A549 (cell line): ENCODE measurements at regions of chr1 and their contacts with region 1.

Region 1: GRCh38 chr1:167533851-167534300 is 15.5 kb upstream of the CD247 start:
- DNase-seq: peak; percentile 68 to 90
- ATAC-seq: peak; percentile 89 to 95
- H3K4me3 ChIP-seq: no peak overlapping the region
- H3K27ac ChIP-seq: no peak overlapping the region
- H3K4me1 ChIP-seq: 0 out of 3 replicates have a peak, but pooled peaks cover 4% of the 10 kb centered on the region
- CTCF ChIP-seq: peak; percentile 88
- EP300 ChIP-seq: no peak
- POLR2A ChIP-seq: no peak
- RAD21 ChIP-seq: peak; percentile 86 to 90

Region 2: DNA sequence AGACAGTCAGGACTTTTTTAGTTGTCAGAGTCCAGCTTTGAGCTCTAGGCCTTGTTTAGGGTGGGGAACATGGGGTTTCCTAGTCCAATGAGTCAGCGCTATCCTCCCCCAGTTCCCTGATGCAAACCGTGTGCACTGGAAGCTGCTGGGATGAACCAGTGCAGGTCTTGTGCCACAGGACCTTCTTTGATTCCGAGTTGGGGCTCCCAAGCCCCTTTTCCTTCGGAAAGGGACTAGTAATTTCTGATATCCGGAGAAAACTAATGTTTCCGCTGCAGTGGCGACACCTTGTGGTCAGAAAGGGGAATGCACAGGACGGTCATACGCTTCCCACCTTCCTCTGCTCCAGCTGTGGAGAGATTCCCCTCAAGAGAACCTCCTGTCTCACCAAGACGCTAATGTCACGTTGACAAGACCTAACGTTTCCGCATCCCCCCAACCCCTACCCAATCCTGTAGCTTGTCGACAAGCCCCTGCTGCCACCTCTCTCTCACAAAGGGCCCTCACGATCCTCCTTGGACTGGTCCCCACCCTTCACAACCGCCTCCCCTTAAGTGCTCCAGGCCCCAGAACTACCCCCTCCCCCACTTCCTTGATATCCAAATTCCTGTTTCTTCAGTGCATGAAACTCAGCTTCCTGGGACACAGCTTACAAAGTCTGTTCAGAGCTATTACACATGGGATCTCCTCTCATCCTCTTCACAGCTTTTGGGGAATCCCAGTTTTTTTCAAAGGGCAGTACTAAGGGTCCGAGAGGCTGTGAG is 474.6 kb before region 1 on chr1:
- CTCF ChIA-PET with region 1: interaction called, 56 read pairs
- POLR2A ChIA-PET with region 1: no interaction called
- DNase-seq: peak; percentile 52 to 67
- ATAC-seq: peak in 1 of 2 experiments; percentile 73; a peak in 3 of 6 replicates
- H3K4me3 ChIP-seq: no peak overlapping the region
- H3K27ac ChIP-seq: peak overlapping the region; percentile 51 to 86
- H3K4me1 ChIP-seq: no peaks in the 10 kb centered on the region
- CTCF ChIP-seq: peak; percentile 92
- EP300 ChIP-seq: no peak
- POLR2A ChIP-seq: no peak
- RAD21 ChIP-seq: peak; percentile 78 to 81

Region 3: DNA sequence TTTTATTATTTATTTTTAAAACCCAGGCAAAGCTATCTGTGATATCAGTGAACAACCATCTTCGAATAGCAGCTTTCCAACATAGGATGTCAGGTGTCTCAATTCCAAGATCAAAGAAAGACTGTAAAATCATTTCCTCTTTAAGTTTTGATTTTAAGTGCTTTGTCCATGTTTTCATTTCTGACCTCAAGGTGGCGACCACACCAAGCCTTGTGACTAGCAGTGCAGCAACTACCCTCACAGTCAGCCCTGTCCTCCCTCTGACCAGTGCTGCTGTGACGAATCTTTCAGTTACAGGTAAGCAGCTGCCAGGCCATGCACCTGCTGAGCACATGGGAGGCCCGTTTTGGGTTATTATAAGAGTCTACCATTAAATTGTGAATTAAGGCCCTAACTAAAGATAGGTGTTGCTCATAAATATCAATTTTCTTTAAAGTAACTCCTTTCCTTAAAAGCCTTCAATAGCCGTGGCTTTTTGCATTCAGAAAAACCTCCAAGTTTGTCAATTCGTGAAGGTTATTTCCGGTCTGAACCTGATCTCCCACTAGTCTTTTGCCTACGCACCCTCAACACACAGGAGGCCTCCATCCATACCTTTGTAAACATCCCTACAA is 132.5 kb before region 1 on chr1:
- CTCF ChIA-PET with region 1: interaction called, 42 read pairs
- POLR2A ChIA-PET with region 1: interaction called, 3 read pairs
- DNase-seq: peak; percentile 51 to 74
- ATAC-seq: peak; percentile 96 to 98
- H3K4me3 ChIP-seq: no peak overlapping the region
- H3K27ac ChIP-seq: no peak overlapping the region
- H3K4me1 ChIP-seq: peaks cover 6% of the 10 kb centered on the region; the same call in 1 of the 3 replicates
- CTCF ChIP-seq: peak; percentile 81
- EP300 ChIP-seq: no peak
- POLR2A ChIP-seq: no peak
- RAD21 ChIP-seq: peak; percentile 67 to 75

Region 4: DNA sequence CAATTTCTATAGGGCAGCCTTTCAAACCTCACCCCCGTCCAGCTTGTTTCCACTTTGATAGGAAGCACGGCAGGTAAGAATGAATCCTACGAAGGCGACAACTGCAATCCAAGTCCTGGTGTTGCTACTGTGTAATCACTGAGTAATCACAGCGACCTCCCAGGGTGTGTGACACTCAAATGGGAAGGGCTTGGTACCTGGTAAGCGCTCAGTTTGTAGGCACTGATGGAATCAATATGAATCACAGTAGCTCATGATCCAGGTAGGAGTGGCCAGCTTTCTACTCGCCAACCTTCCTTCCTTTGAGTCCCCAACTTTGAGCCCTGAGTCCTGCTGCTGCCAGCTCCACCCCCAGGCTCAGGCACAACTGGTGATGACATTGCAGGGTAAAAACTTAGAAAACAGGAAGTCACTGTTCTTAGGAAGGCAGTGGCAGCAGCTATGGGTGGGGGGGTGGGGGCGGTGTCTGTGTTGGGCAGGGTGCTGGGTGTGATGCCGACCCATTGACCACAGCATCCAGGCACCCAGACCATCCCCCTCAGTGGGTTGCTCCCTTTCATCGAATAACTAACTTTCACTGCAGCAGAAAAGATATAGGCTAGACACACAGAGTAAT is 86.2 kb before region 1 on chr1:
- CTCF ChIA-PET with region 1: interaction called, 19 read pairs
- POLR2A ChIA-PET with region 1: no interaction called
- DNase-seq: peak; percentile 24 to 61
- ATAC-seq: peak; percentile 59 to 85
- H3K4me3 ChIP-seq: no peak overlapping the region
- H3K27ac ChIP-seq: peak overlapping the region; percentile 34 to 56; a peak in 5 of 6 replicates
- H3K4me1 ChIP-seq: peaks cover 14% of the 10 kb centered on the region
- CTCF ChIP-seq: no peak
- EP300 ChIP-seq: no peak
- POLR2A ChIP-seq: no peak
- RAD21 ChIP-seq: no peak

Region 5: DNA sequence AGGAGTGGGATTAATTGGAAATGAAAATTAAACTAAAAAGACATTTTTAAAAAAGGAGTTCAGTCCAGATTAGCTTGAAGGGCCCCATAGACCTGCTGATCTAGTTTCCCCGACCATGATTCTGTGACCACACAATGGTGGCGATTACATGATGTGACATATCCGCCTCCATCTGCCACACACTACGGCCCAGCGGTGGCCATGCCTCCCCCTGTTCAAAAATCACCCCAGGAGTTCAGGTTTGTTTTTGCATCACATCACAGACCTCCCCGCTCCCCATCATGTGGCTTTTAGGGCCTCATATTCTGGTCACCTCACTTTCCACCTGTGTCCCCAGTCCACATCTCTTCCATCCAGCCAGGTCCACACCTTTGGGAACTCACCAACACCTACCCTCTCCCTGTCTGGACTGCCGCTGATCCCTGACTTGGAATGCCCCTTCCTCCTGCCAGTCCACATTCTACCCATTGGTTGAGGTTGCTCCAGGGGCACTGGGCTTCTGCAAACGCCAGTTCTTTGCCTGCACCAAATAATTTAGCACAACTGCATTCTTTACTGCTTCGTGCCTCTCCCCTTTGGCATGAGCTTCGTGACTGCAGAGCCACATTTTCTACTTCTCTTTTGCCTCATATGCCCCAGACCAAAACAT is 54.4 kb before region 1 on chr1:
- CTCF ChIA-PET with region 1: interaction called, 10 read pairs
- POLR2A ChIA-PET with region 1: no interaction called
- DNase-seq: no peak
- ATAC-seq: no peak; a peak in 1 of 6 replicates
- H3K4me3 ChIP-seq: no peak overlapping the region
- H3K27ac ChIP-seq: no peak overlapping the region
- H3K4me1 ChIP-seq: no peaks in the 10 kb centered on the region
- CTCF ChIP-seq: no peak
- EP300 ChIP-seq: no peak
- POLR2A ChIP-seq: no peak
- RAD21 ChIP-seq: no peak

Region 6: DNA sequence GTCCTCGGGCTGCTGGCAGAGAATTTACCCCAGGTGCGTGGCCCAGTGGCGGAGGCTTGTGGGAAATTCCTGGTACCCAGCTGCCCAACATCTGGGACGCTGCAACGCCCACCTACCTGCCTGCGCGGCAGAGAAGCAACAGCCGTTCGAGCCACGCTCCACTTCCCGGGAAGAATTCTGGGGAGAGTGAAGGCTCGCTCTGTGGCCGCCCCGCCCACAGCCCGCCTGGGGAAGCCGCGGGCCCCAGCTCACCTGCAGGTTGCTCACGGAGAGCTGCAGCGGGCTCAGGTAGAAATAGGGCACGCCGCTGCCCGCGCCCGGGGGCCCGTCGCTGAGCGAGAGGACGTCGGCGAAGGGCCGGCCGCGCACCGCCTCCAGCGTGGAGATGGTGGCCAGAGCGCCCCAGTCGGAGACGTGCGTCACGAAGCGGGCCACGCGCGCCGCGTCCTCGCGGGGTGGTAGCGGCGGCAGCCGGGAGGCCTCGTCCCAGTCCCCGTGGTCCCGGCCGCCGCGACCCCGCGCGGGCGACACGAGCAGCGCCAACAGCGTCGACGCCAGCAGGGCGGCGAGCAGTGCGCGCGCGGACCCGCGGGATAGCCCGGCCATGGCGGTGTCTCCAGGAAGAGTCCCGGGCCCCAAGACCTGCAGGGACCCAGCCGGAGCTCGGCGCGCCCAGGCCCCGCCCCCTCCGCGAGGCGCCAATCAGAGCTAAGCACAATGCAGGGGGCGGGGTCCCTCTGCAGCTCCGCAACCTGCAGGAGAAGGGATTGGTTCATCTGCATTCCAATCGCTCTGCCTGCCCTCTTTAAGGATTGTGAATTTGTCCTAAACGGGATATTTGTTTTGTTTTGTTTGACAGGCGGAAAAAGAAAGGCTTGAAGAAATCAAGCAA is 19.5 kb after region 1 on chr1 and contains the start of gene CREG1:
- CTCF ChIA-PET with region 1: interaction called, 17 read pairs
- POLR2A ChIA-PET with region 1: interaction called, 3 read pairs
- DNase-seq: peak; percentile 93 to 96
- ATAC-seq: peak; percentile 95 to 100
- H3K4me3 ChIP-seq: peak within 1 kb of the TSS; percentile 68
- H3K27ac ChIP-seq: peak within 1 kb of the TSS; percentile 77 to 95
- H3K4me1 ChIP-seq: peaks cover 21% of the 10 kb centered on the region
- CTCF ChIP-seq: no peak
- EP300 ChIP-seq: no peak
- POLR2A ChIP-seq: peak; percentile 90
- RAD21 ChIP-seq: no peak
- polyA plus RNA-seq, gene CREG1: 129 and 132 TPM in 2 replicates

Region 7: GRCh38 chr1:167950569-167950968 is 416.7 kb after region 1 on chr1:
- CTCF ChIA-PET with region 1: no interaction called
- POLR2A ChIA-PET with region 1: no interaction called
- DNase-seq: no peak
- ATAC-seq: no peak
- H3K4me3 ChIP-seq: no peak overlapping the region
- H3K27ac ChIP-seq: no peak overlapping the region
- H3K4me1 ChIP-seq: peaks cover 35% of the 10 kb centered on the region
- CTCF ChIP-seq: no peak
- EP300 ChIP-seq: no peak
- POLR2A ChIP-seq: no peak
- RAD21 ChIP-seq: no peak